Left cardiac atrium (tissue), 4 donors: ENCODE measurements at regions of chr14 and their contacts with region 1.

Region 1: GRCh38 chr14:37874429-37875191 is 279.2 kb downstream of the TTC6 start:
- DNase-seq: peak; percentile 83
- ATAC-seq: peak; percentile 90 to 92

Region 2: DNA sequence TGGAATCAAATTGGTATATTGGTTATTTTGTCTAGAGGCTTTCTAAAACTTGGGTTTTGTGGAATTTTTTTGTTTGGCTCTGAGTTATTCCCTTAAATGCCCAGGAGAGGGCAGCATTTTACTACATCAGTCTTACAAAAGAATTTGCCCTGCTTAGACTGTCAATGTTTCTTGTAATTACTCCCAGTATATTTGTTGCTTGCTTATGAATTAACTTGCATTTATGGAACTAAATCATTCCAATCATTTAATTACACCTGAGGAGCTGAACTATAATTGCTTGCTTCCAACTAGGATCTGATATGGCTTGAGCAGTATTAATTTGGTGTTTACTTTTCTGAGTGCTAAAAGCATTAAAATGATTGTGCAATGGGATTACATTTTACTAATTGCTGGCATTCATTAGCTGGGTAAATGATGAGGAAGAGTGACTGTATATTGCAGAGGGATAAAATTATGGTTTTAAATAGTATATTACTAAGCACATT is 628.1 kb before region 1 on chr14:
- intact Hi-C with region 1: loop called in 1 of 2 experiments (anchors 5 kb)
- DNase-seq: no peak
- ATAC-seq: no peak

Region 3: GRCh38 chr14:37709419-37710195 is 165.0 kb before region 1 on chr14:
- intact Hi-C with region 1: loop called (anchors 1 to 5 kb)
- DNase-seq: no peak
- ATAC-seq: no peak